ENCODE measurements at regions of chr19 and their contacts with region 1.

Region 1: DNA sequence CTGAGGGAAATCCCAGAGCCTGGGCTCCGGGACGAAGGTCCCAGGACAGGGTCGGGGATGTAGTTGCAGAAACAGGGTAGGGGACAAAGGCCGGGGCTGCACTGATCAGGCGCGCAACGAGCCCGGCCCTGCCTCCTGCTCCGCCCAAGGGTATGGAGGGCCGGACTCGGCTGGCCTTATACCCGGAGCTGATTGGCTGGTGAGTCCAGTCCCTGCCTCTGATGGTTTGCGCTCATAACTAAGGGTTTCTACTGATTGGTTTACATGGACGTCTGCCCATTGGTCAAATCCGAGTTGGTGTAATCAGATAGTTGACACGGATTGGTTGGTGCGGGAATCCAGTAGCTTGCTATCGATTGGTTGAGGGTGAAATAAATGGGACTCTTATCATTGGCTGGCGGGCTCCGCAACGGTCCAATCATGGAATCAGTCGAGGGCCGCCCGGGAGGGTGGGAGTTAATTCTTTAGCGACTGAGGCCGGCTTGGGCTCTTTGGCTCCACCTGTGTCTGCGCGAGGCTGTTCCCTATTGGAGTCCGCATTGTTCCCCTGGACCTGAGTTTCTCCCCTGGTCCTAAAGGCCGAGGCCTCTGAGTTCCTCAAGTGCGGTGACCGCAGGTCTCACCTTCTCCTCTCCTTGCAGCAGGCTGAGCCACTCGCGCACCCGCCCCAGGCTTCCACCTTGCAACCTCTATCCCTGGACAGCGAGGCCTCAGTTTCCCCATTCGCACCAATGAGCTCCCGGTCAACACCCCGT is 570 bp upstream of the MPND start:
- DNase-seq: peak; percentile 95
- ATAC-seq: peak; percentile 97

Region 2: GRCh38 chr19:4354897-4355296 is 12.1 kb after region 1 on chr19:
- intact Hi-C with region 1: loop called (anchors 1 kb)
- DNase-seq: no peak
- ATAC-seq: no peak